Activated CD4-positive, alpha-beta memory T cell treated with anti-CD3 and anti-CD28 coated beads for 36 hours (primary cell): ENCODE measurements at regions of chr1 and their contacts with region 1.

Region 1: GRCh38 chr1:156282479-156283222 is at the start of gene SMG5:
- DNase-seq: peak; percentile 98
- H3K4me3 Mint-ChIP-seq: peak within 1 kb of the TSS; percentile 95
- H3K27ac Mint-ChIP-seq: peak within 1 kb of the TSS; percentile 95
- H3K4me1 Mint-ChIP-seq: peaks cover 38% of the 10 kb centered on the region
- H3K27me3 Mint-ChIP-seq: no peaks in the 10 kb centered on the region
- total RNA-seq, gene SMG5: 65.1 to 68.0 TPM

Region 2: GRCh38 chr1:156140879-156141252 is 141.8 kb before region 1 on chr1:
- CTCF ChIA-PET with region 1: interaction called, 11 read pairs
- POLR2A ChIA-PET with region 1: no interaction called
- intact Hi-C with region 1: no loop called
- DNase-seq: no peak
- H3K4me3 Mint-ChIP-seq: no peak overlapping the region
- H3K27ac Mint-ChIP-seq: no peak overlapping the region
- H3K4me1 Mint-ChIP-seq: peaks cover 4% of the 10 kb centered on the region
- H3K27me3 Mint-ChIP-seq: no peaks in the 10 kb centered on the region

Region 3: DNA sequence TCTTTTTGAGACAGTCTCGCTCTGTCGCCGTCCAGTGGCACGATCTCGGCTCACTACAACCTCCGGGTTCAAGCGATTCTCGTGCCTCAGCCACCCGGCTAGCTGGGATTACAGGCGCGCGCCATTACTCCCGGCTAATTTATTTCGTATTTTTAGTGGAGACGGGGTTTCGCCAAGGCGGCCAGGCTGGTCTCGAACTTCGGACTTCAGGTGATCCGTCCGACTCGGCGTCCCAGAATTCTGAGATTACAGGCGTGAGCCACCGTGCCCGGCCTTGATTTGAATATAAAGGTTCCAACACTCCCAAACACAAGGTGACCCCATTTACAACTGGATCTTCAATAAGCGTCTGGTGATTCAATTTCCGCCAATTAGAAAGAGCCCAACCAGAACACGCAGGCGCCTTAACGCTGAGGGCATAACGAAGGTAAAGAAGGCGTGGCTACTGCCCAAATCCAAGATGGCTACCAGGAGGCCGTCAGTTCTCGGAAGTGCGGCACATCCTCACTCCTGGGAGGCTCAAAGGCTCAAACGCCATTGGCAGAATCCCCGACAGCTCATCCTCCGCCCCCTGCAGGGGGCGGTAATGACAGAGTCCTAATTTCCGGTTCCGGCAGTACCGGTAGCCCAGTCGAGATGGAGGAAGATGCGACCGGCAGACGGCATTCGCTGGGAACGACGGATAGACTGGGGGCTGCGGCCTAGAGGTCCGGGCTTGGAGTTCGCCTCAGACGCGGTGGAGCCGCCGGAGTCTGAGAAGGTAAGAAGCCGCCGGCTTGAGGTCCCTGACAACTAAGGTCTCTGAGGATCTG is 89.0 kb before region 1 on chr1 and contains the start of gene SLC25A44:
- CTCF ChIA-PET with region 1: no interaction called
- POLR2A ChIA-PET with region 1: no interaction called
- intact Hi-C with region 1: loop called (anchors 5 kb)
- DNase-seq: peak; percentile 99
- H3K4me3 Mint-ChIP-seq: peak within 1 kb of the TSS; percentile 100
- H3K27ac Mint-ChIP-seq: peak within 1 kb of the TSS; percentile 81
- H3K4me1 Mint-ChIP-seq: peaks cover 61% of the 10 kb centered on the region
- H3K27me3 Mint-ChIP-seq: no peaks in the 10 kb centered on the region
- total RNA-seq, gene SLC25A44: 61.3 to 62.2 TPM

Region 4: DNA sequence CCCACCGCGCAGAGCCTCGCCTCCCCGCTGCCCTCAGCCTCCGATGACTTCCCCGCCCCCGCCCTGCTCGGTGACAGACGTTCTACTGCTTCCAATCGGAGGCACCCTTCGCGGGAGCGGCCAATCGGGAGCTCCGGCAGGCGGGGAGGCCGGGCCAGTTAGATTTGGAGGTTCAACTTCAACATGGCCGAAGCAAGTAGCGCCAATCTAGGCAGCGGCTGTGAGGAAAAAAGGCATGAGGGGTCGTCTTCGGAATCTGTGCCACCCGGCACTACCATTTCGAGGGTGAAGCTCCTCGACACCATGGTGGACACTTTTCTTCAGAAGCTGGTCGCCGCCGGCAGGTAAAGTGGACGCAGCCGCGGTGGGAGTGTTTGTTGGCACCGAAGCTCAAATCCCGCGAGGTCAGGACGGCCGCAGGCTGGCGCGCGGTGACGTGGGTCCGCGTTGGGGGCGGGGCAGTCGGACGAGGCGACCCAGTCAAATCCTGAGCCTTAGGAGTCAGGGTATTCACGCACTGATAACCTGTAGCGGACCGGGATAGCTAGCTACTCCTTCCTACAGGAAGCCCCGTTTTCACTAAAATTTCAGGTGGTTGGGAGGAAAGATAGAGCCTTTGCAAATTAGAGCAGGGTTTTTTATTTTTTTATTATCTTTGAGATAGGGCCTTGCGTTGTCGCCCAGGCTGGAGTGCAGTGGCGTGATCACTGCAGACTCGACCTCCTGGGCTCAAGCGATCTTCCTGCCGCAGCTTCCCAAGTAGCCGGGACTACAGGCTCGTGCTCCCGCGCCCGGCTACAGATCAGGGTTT is 69.6 kb before region 1 on chr1 and contains the start of gene PMF1:
- CTCF ChIA-PET with region 1: no interaction called
- POLR2A ChIA-PET with region 1: interaction called, 9 read pairs
- intact Hi-C with region 1: loop called (anchors 2 kb)
- DNase-seq: peak; percentile 98
- H3K4me3 Mint-ChIP-seq: peak within 1 kb of the TSS; percentile 76
- H3K27ac Mint-ChIP-seq: peak within 1 kb of the TSS; percentile 96
- H3K4me1 Mint-ChIP-seq: peaks cover 40% of the 10 kb centered on the region
- H3K27me3 Mint-ChIP-seq: no peaks in the 10 kb centered on the region
- total RNA-seq, gene PMF1: 99.5 to 105 TPM

Region 5: DNA sequence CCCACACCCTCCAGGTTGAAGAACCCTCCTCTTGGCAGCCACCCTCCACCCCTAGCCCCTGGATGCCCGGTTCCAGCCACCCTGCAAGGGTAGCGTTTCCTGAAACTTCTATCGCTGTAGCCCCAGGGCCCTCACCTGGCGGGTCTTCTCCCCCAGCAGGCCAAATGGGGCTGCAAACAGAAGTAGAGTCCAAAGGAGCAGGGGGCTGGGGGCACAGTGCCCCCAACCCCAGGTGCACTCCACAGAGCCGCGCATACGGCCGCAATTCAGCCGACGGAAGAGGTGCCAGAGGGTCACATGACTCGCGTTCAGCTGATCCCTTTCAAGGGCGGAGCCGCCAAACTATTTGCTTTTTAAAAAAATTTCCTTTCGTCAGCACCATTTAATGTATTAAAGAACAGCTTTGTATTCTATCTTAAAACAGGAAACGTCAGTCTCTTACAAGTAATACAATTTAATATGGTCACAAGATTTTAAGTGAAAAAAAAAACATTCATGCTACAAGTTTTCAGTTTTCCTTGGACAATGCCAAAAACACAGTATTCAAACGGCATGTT is 12.8 kb after region 1 on chr1 and contains the start of gene GLMP:
- CTCF ChIA-PET with region 1: interaction called, 5 read pairs
- POLR2A ChIA-PET with region 1: interaction called, 15 read pairs
- intact Hi-C with region 1: loop called (anchors 1 kb)
- DNase-seq: peak; percentile 72
- H3K4me3 Mint-ChIP-seq: peak within 1 kb of the TSS; percentile 84
- H3K27ac Mint-ChIP-seq: no peak within 1 kb of the TSS
- H3K4me1 Mint-ChIP-seq: peaks cover 16% of the 10 kb centered on the region
- H3K27me3 Mint-ChIP-seq: no peaks in the 10 kb centered on the region
- total RNA-seq, gene GLMP: 13.0 to 14.8 TPM

Region 6: DNA sequence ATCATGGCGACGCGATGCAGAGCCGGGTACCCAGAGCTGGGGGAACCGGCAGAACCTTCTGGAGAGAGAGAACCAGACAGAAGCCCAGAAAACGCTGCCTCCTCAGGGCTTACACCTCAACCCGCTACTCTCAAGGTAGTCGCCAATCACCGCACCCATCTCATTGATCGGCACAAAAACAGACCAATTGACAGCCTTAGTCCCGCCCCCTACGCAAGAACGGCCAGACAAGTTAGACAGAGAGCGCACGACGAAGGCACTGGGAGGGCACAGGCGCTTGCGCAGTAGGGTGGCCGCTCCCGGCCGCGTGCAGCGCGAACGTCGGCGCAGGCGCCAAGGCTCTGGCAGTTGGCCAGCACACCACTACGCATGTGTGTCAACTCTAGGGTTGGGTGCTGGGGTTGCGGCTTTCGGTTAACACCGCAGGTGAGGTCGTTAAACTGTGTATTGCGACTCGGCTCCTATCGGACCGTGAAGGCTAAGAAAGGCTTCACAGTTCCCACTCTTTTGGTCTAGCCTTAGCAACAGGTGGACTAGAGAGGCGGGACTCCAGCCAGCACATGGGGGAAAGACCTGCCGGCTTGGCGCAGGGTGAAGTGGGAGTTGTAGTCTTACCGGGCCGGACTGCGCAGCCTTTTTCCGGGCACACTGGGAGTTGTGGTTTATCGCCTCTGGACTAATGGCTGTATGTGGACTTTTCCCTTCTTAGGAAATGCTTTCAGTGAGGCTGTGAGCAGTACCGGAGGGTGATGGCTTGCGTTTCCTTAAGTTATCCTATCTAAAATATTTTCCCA is 55.7 kb after region 1 on chr1 and contains the starts of genes CCT3 and TSACC:
- CTCF ChIA-PET with region 1: interaction called, 3 read pairs
- POLR2A ChIA-PET with region 1: interaction called, 14 read pairs
- intact Hi-C with region 1: loop called (anchors 5 kb)
- DNase-seq: peak; percentile 99
- H3K4me3 Mint-ChIP-seq: peak within 1 kb of the TSS; percentile 90
- H3K27ac Mint-ChIP-seq: peak within 1 kb of the TSS; percentile 95
- H3K4me1 Mint-ChIP-seq: peaks cover 27% of the 10 kb centered on the region
- H3K27me3 Mint-ChIP-seq: no peaks in the 10 kb centered on the region
- total RNA-seq, gene CCT3: 344 to 356 TPM
- total RNA-seq, gene TSACC: not detected

Region 7: DNA sequence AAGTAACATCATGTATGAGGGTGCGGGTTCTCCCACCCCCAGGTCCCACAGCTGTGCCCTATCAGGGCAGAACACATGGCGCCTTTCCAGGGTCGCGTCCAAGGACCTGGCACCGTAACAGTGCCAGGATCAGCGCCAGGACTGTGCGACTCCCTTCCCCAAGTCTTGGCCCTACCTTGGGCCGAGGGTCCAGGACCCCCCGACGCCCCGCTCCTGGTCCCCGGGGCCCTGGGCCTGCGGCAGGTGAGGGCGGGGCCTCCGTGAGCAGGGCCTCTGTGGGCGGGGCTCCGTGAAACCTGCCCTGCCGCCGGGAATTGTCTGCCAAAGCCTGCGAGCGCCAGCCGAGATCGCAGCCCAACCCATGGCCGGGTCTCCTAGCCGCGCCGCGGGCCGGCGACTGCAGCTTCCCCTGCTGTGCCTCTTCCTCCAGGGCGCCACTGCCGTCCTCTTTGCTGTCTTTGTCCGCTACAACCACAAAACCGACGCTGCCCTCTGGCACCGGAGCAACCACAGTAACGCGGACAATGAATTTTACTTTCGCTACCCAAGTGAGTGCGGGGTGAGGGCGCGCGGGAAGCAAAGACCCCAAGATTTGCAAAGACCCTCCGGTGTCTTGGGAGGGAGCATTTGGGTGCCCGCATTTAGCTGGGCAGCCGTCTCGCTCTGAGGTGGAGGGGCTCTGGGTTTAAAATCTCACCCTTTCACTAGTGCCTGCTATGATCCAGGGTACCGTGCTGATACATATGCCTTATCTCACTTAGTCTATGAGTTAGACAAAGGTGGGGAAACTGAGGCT is 86.4 kb after region 1 on chr1 and contains the start of gene RHBG:
- CTCF ChIA-PET with region 1: no interaction called
- POLR2A ChIA-PET with region 1: no interaction called
- intact Hi-C with region 1: no loop called
- DNase-seq: peak; percentile 24
- H3K4me3 Mint-ChIP-seq: no peak within 1 kb of the TSS
- H3K27ac Mint-ChIP-seq: no peak within 1 kb of the TSS
- H3K4me1 Mint-ChIP-seq: peaks cover 2% of the 10 kb centered on the region
- H3K27me3 Mint-ChIP-seq: peaks cover 31% of the 10 kb centered on the region
- total RNA-seq, gene RHBG: not detected

Region 8: GRCh38 chr1:156740679-156741612 is 458.3 kb after region 1 on chr1 and contains the start of gene MRPL24:
- CTCF ChIA-PET with region 1: no interaction called
- POLR2A ChIA-PET with region 1: no interaction called
- intact Hi-C with region 1: loop called (anchors 5 kb)
- DNase-seq: peak; percentile 98
- H3K4me3 Mint-ChIP-seq: peak within 1 kb of the TSS; percentile 89
- H3K27ac Mint-ChIP-seq: peak within 1 kb of the TSS; percentile 95
- H3K4me1 Mint-ChIP-seq: peaks cover 47% of the 10 kb centered on the region
- H3K27me3 Mint-ChIP-seq: no peaks in the 10 kb centered on the region
- total RNA-seq, gene MRPL24: 105 to 106 TPM